Activated CD8-positive, alpha-beta T cell treated with anti-CD3 and anti-CD28 coated beads for 36 hours (primary cell): ENCODE measurements at regions of chr11 and their contacts with region 1.

Region 1: DNA sequence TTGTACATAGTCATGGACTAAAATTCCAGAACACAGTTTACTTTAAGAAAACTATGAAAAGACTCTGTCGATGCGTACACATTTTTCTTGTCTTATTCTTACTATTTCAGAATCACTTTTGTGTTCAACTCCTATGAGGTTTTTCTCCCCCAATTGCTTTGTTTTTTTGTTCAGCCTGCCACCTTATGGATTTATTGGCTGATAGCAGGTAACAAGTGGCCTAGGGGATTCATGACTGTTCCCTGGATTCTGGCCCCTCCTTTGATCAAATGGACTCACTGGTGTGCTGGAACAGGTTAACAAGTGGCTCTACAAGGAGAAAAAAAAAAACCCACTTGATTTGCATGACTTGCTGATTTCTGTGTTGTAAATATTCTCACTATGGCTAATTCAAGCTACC is 10.6 kb downstream of the MMP20 start:
- DNase-seq: no peak
- ATAC-seq: peak; percentile 28
- H3K4me3 Mint-ChIP-seq: no peak overlapping the region
- H3K27ac Mint-ChIP-seq: no peak overlapping the region
- H3K4me1 Mint-ChIP-seq: peaks cover 5% of the 10 kb centered on the region
- H3K27me3 Mint-ChIP-seq: no peaks in the 10 kb centered on the region
- CTCF ChIP-seq: peak; percentile 25

Region 2: DNA sequence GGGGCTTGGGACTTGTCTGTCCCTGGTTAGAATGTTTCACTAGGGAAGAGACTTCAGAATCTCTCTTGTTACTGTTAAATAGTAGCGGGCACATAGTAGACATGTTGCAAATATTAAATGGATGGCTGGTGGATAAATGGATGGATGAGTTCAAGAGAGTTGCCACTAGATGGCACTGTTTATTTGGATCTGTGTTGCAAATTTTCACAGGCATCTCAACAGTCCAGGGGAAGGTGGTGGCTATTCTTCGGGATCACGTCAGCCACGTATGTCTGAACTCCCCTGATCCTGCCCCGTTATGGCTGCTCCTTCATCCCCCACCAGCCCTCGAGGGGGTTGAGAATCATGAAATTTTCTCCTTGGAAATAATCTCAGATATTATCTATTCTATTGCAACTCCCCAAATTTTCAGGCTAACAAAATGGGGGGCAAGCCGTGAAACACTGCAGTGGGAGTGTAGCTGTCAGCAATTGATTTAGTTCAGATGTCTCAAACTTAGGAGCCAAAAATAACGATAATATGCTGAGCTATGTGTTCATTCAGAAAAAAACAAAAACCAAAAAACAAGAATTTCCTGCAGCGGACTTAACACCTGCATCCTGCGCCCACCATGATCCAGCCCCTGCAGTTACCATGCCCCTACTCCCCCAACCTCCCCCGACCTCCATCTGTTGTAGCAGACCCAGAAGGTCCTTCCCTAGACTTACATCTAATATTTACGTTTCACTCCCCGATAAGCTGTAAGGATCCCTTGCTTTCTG is 326.3 kb before region 1 on chr11:
- CTCF ChIA-PET with region 1: interaction called, 17 read pairs
- POLR2A ChIA-PET with region 1: no interaction called
- intact Hi-C with region 1: no loop called
- DNase-seq: peak; percentile 43
- ATAC-seq: peak; percentile 91
- H3K4me3 Mint-ChIP-seq: peak overlapping the region; percentile 53
- H3K27ac Mint-ChIP-seq: peak overlapping the region; percentile 25
- H3K4me1 Mint-ChIP-seq: peaks cover 19% of the 10 kb centered on the region
- H3K27me3 Mint-ChIP-seq: no peaks in the 10 kb centered on the region
- CTCF ChIP-seq: peak; percentile 72

Region 3: DNA sequence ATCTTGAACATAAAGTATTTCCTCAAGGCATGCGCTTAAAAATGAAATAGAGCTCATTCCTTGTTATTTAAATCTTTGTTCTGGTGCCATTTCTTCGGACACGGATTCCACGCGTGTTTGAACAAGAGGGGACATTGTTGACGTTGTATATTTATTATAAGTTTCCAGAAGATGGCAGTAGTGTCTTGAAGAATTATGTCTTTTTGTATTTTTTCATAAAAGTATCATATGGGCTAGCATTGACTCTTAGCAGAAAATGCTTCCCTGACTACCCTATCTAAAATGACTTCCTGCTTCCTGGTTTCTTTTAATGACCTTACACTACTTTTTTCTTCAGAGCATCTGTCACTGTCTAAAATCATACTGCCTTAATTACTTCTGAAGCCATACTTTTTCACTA is 247.1 kb before region 1 on chr11:
- CTCF ChIA-PET with region 1: interaction called, 20 read pairs
- POLR2A ChIA-PET with region 1: no interaction called
- intact Hi-C with region 1: no loop called
- DNase-seq: no peak
- ATAC-seq: peak; percentile 64
- H3K4me3 Mint-ChIP-seq: no peak overlapping the region
- H3K27ac Mint-ChIP-seq: peak overlapping the region; percentile 34
- H3K4me1 Mint-ChIP-seq: peaks cover 30% of the 10 kb centered on the region
- H3K27me3 Mint-ChIP-seq: no peaks in the 10 kb centered on the region
- CTCF ChIP-seq: peak; percentile 56

Region 4: DNA sequence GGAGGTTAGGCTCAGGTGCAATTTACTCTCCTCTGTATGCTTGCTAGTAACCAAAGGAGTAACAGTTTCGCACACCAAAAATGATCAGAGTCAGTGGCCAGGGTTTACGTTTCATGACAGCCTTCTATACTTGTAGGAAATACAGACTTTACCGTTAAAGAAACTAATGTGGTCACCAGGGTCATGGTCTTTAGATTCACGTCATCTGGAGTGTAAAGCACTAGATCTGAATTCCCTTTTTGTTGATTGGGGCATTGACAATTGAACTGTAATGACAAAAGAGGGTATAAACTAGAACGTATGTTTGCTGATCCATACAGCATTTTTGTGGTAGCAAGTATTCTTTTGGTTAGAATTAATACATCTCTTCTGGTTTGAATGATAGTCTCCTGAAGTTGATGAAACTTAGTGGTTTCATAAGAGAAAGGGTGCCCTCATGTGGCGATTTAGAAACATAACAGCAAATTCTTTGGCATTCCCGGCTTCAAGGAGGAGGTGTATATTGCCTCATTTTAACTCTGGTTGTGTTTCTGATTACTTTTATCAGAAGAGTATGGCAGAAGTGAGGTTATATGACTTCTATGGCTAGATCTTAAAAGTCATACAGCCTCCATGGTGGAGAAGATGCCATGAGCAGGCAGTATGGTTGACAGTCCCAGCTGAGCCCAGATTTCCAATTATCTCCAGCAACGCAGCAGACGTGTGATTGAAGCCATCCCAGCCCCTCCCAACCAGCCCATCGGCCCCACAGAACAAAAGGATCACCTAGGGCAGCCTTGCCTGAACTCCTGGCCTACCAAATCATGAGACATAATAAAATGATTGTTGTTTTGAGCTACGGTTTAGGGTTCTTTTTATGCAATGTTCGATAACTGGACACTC is 119.1 kb before region 1 on chr11:
- CTCF ChIA-PET with region 1: interaction called, 33 read pairs
- POLR2A ChIA-PET with region 1: no interaction called
- intact Hi-C with region 1: loop called (anchors 5 kb)
- DNase-seq: peak; percentile 51
- ATAC-seq: peak; percentile 68
- H3K4me3 Mint-ChIP-seq: no peak overlapping the region
- H3K27ac Mint-ChIP-seq: peak overlapping the region; percentile 14
- H3K4me1 Mint-ChIP-seq: peaks cover 23% of the 10 kb centered on the region
- H3K27me3 Mint-ChIP-seq: peaks cover 1% of the 10 kb centered on the region
- CTCF ChIP-seq: peak; percentile 92

Region 5: DNA sequence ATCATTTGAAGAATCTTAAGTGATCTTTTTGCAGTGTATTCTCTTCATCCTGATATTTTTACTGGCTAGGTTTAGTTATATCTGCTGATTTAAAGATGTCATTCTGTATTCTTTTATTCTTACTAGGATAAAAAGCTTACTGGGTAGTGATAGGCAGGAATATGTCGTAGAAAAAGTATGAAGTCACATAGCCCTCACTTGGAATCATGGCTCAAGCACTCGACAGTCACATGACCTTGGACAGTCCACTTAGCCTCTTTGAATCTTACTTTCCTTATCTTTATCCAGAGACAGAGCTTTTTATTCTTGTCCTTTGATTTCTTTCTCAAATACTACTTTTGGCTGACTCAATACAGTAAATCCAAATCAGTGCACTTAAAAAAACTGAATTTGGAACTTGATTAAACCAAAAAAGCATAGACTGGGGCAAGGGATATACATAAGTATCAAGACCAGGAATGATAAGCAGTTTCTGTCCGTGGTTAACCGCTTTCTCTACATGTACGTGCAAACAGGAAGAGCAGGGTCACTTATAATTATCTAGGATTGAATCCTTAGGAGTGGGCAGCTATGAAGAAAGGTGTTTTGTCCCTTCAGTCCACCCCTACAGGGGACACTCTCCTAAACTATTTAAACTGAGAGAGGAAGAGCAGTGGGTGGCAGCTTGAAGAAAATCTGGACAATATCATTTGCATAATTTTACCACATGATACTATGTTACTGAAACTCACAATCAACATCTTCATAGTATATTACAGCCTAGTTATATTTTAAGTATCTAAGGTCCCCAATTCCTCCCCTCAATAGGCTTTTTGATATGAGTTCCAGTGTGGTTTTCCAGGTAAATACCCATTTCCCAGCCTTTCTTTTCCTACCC is 91.9 kb before region 1 on chr11:
- CTCF ChIA-PET with region 1: interaction called, 14 read pairs
- POLR2A ChIA-PET with region 1: no interaction called
- intact Hi-C with region 1: no loop called
- DNase-seq: no peak
- ATAC-seq: no peak
- H3K4me3 Mint-ChIP-seq: no peak overlapping the region
- H3K27ac Mint-ChIP-seq: no peak overlapping the region
- H3K4me1 Mint-ChIP-seq: peaks cover 3% of the 10 kb centered on the region
- H3K27me3 Mint-ChIP-seq: peaks cover 4% of the 10 kb centered on the region
- CTCF ChIP-seq: no peak

Region 6: DNA sequence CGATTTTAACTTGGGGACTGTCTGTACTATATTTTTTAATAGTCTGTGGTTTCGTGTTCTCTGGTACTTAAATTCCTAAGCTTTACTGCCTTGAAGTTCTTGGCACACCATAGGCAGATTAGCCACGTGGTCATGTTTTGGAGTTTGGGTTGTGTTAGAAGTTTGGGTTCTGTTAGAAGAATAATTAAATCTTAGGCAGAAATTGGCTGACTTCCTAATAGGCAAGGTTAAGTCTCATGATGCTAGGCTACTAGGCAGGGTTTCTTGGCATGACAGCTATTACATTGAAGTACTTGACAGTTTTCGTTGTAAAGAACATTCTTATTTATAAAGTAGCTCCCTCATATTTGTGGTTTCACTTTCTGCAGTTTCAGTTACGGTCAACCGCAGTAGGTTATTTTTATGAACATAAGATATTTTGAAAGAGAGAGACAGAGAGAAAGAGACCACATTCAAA is 53.9 kb before region 1 on chr11:
- CTCF ChIA-PET with region 1: interaction called, 21 read pairs
- POLR2A ChIA-PET with region 1: interaction called, 3 read pairs
- intact Hi-C with region 1: no loop called
- DNase-seq: peak; percentile 33
- ATAC-seq: peak; percentile 47
- H3K4me3 Mint-ChIP-seq: peak overlapping the region; percentile 50
- H3K27ac Mint-ChIP-seq: peak overlapping the region; percentile 77
- H3K4me1 Mint-ChIP-seq: peaks cover 46% of the 10 kb centered on the region
- H3K27me3 Mint-ChIP-seq: no peaks in the 10 kb centered on the region
- CTCF ChIP-seq: no peak

Region 7: DNA sequence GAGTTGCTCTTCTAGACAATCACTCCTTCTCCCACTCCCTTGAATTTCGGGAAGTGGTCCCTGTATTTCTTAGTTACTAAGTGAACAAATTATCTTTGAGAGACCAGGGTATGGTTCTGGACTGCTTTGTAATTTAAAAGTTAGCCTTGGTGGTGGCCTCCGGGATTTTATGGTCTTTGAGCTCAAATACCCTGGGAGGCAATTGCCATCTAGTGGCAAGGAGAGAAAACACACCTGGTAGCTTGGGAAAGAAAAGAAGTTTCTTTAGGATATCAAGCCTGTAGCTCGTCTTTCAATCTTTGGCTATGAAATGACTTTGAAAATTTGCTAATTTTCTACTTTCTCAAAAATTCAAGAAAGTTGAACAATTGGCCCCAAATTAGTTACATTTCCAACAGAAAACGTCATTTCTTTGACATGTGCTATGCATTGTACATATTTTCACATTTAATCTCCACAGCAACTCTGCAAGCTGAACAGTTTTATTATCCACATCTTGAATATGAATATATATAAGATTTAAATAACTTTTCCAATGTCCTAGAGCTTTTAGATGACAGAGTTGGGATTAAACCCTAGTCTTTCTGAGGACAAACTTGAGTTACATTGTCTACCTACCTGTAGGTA is 52.0 kb after region 1 on chr11:
- CTCF ChIA-PET with region 1: interaction called, 31 read pairs
- POLR2A ChIA-PET with region 1: no interaction called
- intact Hi-C with region 1: no loop called
- DNase-seq: peak; percentile 23
- ATAC-seq: no peak
- H3K4me3 Mint-ChIP-seq: no peak overlapping the region
- H3K27ac Mint-ChIP-seq: no peak overlapping the region
- H3K4me1 Mint-ChIP-seq: no peaks in the 10 kb centered on the region
- H3K27me3 Mint-ChIP-seq: peaks cover 2% of the 10 kb centered on the region
- CTCF ChIP-seq: peak; percentile 78